Activated CD8-positive, alpha-beta T cell treated with anti-CD3 and anti-CD28 coated beads, Interleukin-2, amount 10 ng/mL, durations not matched to agents 7 days and 5 days (primary cell): ENCODE measurements at regions of chr11 and their contacts with region 1.

Region 1: DNA sequence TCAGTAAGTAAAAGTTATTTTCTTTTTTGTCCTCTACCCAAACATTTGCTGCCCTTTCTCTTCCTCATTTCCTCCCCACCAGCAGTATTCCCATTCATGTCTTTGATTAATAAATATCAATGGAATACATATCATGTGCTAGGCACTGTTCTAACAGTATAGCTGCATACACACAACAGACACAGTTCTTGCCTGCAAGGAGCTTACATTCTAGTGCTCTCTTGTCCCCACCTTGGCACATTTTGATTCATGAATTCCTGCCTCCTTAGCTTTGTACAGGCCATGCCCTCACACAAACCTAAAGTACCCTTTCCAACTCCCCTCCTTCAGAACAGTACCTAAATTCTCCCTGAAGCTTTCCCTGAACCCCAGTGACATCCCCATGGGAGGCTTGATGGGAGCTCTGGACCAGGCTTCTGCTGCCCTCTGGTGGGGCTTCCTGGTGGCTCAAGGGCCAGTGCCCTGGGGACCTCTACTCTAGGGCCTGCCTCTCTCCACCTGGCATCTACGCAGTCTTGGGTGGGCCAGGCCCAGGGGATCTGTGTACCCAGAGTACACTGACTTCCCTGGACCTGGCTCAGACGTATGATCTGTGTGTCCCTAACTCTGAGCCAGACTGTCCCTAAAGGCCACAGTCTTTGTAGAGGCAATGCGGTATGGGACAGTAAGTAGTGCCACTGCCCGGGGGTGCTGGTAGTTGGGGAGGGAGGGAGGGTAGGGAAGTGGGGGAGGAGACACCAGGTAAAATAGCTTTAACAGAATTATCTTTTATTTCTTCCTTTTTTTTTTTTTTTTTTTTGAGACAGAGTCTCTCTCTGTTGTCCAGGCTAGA is 14.1 kb downstream of the RPS13 start:
- DNase-seq: peak; percentile 55
- ATAC-seq: peak; percentile 84
- H3K4me3 Mint-ChIP-seq: no peak overlapping the region
- H3K27ac Mint-ChIP-seq: no peak overlapping the region
- H3K4me1 Mint-ChIP-seq: no peaks in the 10 kb centered on the region
- H3K27me3 Mint-ChIP-seq: peaks cover 3% of the 10 kb centered on the region

Region 2: DNA sequence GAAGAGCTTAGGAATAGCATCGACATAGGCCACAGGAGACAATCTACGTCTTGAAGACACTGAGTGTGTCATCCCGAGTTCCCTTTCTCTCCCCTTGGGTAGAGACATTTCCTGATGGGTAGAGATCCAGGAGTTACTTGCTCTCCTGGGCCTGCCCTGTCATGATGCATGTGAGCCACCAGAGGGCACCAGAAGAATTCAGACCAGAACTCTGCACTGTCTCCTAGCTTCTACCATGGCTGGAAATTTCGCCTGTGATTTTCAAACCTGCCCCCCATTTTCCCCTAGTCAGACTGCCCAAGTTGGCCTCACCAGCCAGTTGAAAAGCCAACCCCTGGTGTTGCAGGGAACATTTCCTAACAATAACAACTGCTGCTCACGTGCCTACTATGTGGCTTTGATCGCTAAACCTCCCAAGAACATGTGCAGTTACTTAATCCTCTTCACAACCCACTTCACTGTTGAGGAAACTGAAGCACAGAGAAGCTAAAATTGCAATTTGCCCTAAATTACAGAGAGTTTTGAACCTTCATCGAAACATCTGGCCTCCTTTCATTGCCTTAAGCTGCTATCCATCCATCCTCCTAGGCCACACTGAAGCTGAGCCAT is 277.8 kb before region 1 on chr11:
- CTCF ChIA-PET with region 1: interaction called, 28 read pairs
- POLR2A ChIA-PET with region 1: no interaction called
- DNase-seq: peak; percentile 64
- ATAC-seq: peak; percentile 83
- H3K4me3 Mint-ChIP-seq: no peak overlapping the region
- H3K27ac Mint-ChIP-seq: no peak overlapping the region
- H3K4me1 Mint-ChIP-seq: no peaks in the 10 kb centered on the region
- H3K27me3 Mint-ChIP-seq: no peaks in the 10 kb centered on the region

Region 3: GRCh38 chr11:16935518-16936302 is 127.7 kb before region 1 on chr11:
- CTCF ChIA-PET with region 1: interaction called, 11 read pairs
- POLR2A ChIA-PET with region 1: no interaction called
- DNase-seq: peak; percentile 46
- ATAC-seq: peak; percentile 51
- H3K4me3 Mint-ChIP-seq: no peak overlapping the region
- H3K27ac Mint-ChIP-seq: no peak overlapping the region
- H3K4me1 Mint-ChIP-seq: no peaks in the 10 kb centered on the region
- H3K27me3 Mint-ChIP-seq: peaks cover 15% of the 10 kb centered on the region

Region 4: GRCh38 chr11:16945671-16946469 is 117.5 kb before region 1 on chr11:
- CTCF ChIA-PET with region 1: interaction called, 18 read pairs
- POLR2A ChIA-PET with region 1: no interaction called
- DNase-seq: peak; percentile 54
- ATAC-seq: peak; percentile 79
- H3K4me3 Mint-ChIP-seq: no peak overlapping the region
- H3K27ac Mint-ChIP-seq: no peak overlapping the region
- H3K4me1 Mint-ChIP-seq: peaks cover 3% of the 10 kb centered on the region
- H3K27me3 Mint-ChIP-seq: peaks cover 6% of the 10 kb centered on the region

Region 5: GRCh38 chr11:17012706-17013547 is 50.5 kb before region 1 on chr11:
- CTCF ChIA-PET with region 1: no interaction called
- POLR2A ChIA-PET with region 1: no interaction called
- DNase-seq: no peak
- ATAC-seq: no peak
- H3K4me3 Mint-ChIP-seq: peak overlapping the region; percentile 53
- H3K27ac Mint-ChIP-seq: peak overlapping the region; percentile 21
- H3K4me1 Mint-ChIP-seq: peaks cover 7% of the 10 kb centered on the region
- H3K27me3 Mint-ChIP-seq: peaks cover 27% of the 10 kb centered on the region

Region 6: GRCh38 chr11:17077520-17078401 is 14.4 kb after region 1 on chr11 and contains the start of gene RPS13:
- CTCF ChIA-PET with region 1: interaction called, 11 read pairs
- POLR2A ChIA-PET with region 1: interaction called, 5 read pairs
- DNase-seq: peak; percentile 97
- ATAC-seq: peak; percentile 92
- H3K4me3 Mint-ChIP-seq: peak within 1 kb of the TSS; percentile 96
- H3K27ac Mint-ChIP-seq: peak within 1 kb of the TSS; percentile 99
- H3K4me1 Mint-ChIP-seq: peaks cover 36% of the 10 kb centered on the region
- H3K27me3 Mint-ChIP-seq: no peaks in the 10 kb centered on the region
- total RNA-seq, gene RPS13: 986 to 1,008 TPM